SK-N-SH (cell line): ENCODE measurements at regions of chr2 and their contacts with region 1.

Region 1: DNA sequence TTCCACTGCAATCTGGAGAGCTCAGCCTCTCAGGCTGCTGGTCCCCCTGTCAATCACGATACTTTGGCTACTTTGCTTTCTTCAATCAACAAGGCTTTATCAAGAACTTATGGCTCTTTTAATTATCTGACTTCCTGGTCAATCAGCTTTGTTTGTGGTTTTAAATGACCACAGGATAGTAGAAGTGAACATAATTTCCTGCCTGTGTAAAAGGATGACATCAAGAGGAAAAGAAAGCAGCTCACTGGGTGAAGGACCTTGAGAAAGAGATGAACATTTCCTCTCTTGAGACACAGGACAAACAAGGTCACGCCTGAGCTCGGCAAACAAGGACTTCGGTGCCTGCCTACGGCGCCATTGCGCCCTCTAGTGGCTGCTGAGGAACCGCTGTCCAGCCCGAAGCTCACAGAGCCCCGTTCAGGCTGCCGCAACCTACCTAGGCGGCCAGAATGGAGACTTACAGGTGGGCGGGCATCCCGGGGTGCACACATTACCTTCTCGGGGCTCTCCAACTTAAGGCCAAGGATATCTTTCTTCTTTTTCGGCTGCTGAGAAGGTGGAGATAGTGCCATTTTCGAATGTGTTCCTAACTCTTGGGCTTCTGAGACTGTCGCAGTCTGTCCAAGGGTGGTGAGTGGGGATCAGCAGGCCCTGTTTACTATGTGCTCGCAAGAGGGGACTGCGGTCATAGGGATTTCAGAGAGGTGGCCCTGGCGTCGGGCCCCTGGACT is 54.0 kb downstream of the IL1RL2 start:
- DNase-seq: peak; percentile 78
- H3K4me3 ChIP-seq: peak overlapping the region in 1 of 2 experiments; percentile 40; a peak in 1 of 4 replicates
- H3K27ac ChIP-seq: peak overlapping the region in 1 of 2 experiments; percentile 78; a peak in 2 of 4 replicates
- H3K4me1 ChIP-seq: peaks cover 4 to 9% of the 10 kb centered on the region in 2 experiments; a peak in 2 of 4 replicates
- H3K27me3 ChIP-seq: no peaks in the 10 kb centered on the region
- CTCF ChIP-seq: peak; percentile 97
- EP300 ChIP-seq: no peak
- RAD21 ChIP-seq: peak; percentile 87

Region 2: GRCh38 chr2:102005989-102006885 is 234.6 kb before region 1 on chr2:
- CTCF ChIA-PET with region 1: interaction called, 41 read pairs
- POLR2A ChIA-PET with region 1: no interaction called
- DNase-seq: peak; percentile 47
- H3K4me3 ChIP-seq: no peak overlapping the region
- H3K27ac ChIP-seq: no peak overlapping the region
- H3K4me1 ChIP-seq: no peaks in the 10 kb centered on the region
- H3K27me3 ChIP-seq: no peaks in the 10 kb centered on the region
- CTCF ChIP-seq: peak; percentile 79
- EP300 ChIP-seq: no peak
- RAD21 ChIP-seq: peak; percentile 56

Region 3: DNA sequence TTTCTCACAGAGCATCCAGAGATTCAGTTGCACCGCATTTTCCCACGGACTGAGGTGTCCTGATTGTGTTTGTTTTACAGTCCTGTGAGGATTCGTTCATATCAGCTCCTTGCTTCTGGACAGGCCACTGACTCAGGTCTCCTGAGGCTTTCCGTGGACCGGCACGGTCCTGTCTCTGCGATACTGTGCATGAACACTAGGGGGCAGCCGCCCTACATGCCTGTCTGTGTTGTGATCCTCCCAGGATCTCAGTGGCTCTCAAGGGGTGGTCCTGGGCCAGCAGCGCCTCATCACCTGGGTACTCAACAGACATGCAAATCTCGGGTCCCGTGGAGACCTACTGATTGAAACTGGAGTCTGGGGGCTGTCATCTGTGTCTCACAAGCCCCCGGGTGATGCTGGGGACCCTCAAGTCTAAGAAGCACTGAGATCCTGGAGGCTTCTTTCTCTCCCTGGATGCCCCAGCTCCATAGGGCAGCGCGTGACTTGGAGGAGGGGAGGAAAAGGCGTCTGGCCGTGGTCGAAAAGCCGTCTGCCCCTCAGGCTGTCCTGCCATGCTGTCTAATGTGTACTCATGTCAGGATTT is 220.1 kb before region 1 on chr2:
- CTCF ChIA-PET with region 1: interaction called, 159 read pairs
- POLR2A ChIA-PET with region 1: interaction called, 3 read pairs
- DNase-seq: peak; percentile 81
- H3K4me3 ChIP-seq: no peak overlapping the region
- H3K27ac ChIP-seq: no peak overlapping the region
- H3K4me1 ChIP-seq: no peaks in the 10 kb centered on the region
- H3K27me3 ChIP-seq: no peaks in the 10 kb centered on the region
- CTCF ChIP-seq: peak; percentile 96
- EP300 ChIP-seq: no peak
- RAD21 ChIP-seq: peak; percentile 93

Region 4: GRCh38 chr2:102063941-102064678 is 176.7 kb before region 1 on chr2:
- CTCF ChIA-PET with region 1: interaction called, 10 read pairs
- POLR2A ChIA-PET with region 1: no interaction called
- DNase-seq: peak; percentile 72
- H3K4me3 ChIP-seq: peak overlapping the region; percentile 15 to 41; a peak in 2 of 4 replicates
- H3K27ac ChIP-seq: peak overlapping the region; percentile 88 to 99
- H3K4me1 ChIP-seq: peaks cover 32 to 37% of the 10 kb centered on the region in 2 experiments
- H3K27me3 ChIP-seq: no peaks in the 10 kb centered on the region
- CTCF ChIP-seq: no peak
- EP300 ChIP-seq: peak; percentile 81 to 87
- RAD21 ChIP-seq: no peak

Region 5: GRCh38 chr2:102251042-102251848 is 10.4 kb after region 1 on chr2:
- CTCF ChIA-PET with region 1: interaction called, 23 read pairs
- POLR2A ChIA-PET with region 1: no interaction called
- DNase-seq: peak; percentile 45
- H3K4me3 ChIP-seq: peak overlapping the region; percentile 45 to 56
- H3K27ac ChIP-seq: no peak overlapping the region
- H3K4me1 ChIP-seq: no peaks in the 10 kb centered on the region
- H3K27me3 ChIP-seq: no peaks in the 10 kb centered on the region
- CTCF ChIP-seq: peak; percentile 52; the same call in 1 of the 2 replicates
- EP300 ChIP-seq: no peak
- RAD21 ChIP-seq: no peak